BJ (cell line): ENCODE measurements at regions of chr11 and their contacts with region 1.

Region 1: GRCh38 chr11:35030716-35031213 is 108.2 kb upstream of the CD44 start:
- DNase-seq: peak; percentile 79
- H3K4me3 ChIP-seq: no peak overlapping the region
- H3K27me3 ChIP-seq: no peaks in the 10 kb centered on the region
- CTCF ChIP-seq: no peak

Region 2: DNA sequence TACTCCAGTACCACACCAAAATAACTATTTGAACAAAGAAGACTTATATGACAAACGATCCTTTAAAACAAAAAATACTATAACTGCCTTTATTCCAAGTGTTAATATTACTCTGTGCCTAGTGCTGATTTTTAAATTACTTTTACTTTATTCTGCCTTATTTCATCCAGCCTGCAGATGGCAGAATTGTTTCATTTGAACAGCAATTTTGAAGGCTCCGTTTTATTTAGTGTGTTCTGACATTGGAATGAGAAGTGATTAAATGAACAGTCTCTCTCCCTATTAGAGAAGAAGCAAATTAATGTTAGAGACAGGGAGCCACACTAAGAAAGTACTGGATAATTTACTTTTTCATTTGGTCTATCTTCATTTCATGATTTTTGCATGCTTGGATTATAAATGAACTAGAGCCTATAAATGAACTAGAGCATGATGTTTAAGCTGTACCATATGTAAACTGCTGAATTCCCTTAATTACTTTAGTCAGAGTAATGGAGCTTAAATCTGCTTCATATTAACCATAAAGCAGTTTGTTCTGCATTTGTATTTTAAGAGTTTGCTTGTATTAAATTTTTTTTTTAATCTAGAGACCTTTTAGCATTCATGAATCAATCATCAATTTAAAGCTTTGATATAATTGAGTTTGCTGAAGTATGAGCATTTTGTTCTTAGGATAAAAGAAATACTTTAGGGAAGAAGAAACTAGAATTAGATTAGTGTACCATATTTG is 104.5 kb before region 1 on chr11:
- CTCF ChIA-PET with region 1: no interaction called
- POLR2A ChIA-PET with region 1: no interaction called
- DNase-seq: no peak
- H3K4me3 ChIP-seq: no peak overlapping the region
- H3K27me3 ChIP-seq: no peaks in the 10 kb centered on the region
- CTCF ChIP-seq: peak; percentile 64

Region 3: DNA sequence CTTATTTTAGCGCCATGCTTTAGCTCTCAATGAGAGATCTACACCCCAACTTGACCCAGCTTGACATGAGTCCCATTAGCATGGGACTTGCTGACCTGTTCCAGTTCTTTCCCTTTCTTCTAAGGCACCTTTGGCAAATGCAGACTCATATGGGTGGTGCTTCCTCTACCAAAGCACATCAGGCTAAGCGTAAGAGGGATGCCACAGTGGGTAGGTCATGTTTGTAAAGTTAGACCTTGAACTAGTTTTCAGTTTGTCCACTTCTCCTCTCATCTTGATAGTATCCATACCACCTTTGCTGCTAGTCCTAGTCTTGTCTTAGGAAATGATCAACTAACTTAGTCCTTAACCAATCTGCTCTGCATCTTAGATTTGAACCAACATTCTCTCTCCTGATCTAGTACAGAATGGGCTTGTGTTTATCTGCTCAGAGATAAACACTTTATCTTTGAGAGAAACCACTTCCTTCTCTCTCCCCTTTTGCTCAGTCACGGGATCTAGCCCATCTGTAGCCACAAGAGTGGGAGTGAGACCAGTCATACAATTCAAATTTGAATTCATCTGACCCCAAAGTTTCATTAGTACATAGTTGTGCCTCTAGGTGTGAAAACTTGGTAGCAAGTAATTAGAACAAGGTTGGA is 36.1 kb after region 1 on chr11:
- CTCF ChIA-PET with region 1: no interaction called
- POLR2A ChIA-PET with region 1: no interaction called
- DNase-seq: no peak
- H3K4me3 ChIP-seq: no peak overlapping the region
- H3K27me3 ChIP-seq: no peaks in the 10 kb centered on the region
- CTCF ChIP-seq: no peak

Region 4: DNA sequence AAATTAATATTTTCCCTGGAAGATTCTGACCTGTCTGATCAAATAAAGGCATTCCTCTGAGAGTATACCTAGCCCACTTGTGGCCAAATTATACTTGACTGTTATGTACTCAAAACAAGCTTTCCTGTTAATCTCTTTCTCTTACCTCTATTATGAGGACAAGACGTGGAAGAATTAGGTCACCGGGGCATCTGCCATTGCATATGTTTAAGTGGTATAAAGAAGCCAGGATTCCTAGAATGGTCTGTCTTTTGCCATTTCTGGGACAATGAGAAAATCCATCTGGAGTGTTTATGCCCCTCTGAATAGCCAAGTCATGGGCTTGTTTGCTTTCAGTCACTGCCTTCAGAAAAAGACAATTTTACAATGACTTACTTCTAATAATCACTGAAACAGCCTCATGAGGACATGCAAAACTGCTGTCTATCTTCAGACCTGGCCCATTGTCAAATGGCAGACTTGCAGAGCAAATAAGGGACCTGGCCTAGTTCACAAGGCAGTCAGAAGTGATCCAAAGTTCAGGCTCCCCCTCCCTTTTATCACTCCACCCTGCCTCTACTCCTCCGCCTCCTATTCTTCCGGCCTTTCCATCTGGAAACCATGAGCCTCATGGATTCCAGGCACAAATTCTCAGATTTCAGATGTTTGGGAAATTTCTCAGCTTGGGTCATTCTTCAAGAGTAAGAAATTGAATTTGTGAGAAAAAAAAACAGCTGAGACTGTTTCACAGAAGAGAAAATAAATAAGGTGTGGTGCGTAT is 785.0 kb after region 1 on chr11:
- CTCF ChIA-PET with region 1: no interaction called
- POLR2A ChIA-PET with region 1: interaction called, 15 read pairs
- DNase-seq: peak; percentile 74
- H3K4me3 ChIP-seq: no peak overlapping the region
- H3K27me3 ChIP-seq: no peaks in the 10 kb centered on the region
- CTCF ChIP-seq: no peak